ENCODE measurements at regions of chr17 and their contacts with region 1.

Region 1: GRCh38 chr17:82494236-82495055 is 25.1 kb upstream of the FOXK2 start:
- DNase-seq: peak; percentile 80
- H3K4me3 ChIP-seq: no peak overlapping the region
- H3K27ac ChIP-seq: no peak overlapping the region
- H3K4me1 ChIP-seq: no peaks in the 10 kb centered on the region
- H3K27me3 ChIP-seq: no peaks in the 10 kb centered on the region
- CTCF ChIP-seq: peak; percentile 31 to 90 (median 80)
- POLR2A ChIP-seq: no peak

Region 2: DNA sequence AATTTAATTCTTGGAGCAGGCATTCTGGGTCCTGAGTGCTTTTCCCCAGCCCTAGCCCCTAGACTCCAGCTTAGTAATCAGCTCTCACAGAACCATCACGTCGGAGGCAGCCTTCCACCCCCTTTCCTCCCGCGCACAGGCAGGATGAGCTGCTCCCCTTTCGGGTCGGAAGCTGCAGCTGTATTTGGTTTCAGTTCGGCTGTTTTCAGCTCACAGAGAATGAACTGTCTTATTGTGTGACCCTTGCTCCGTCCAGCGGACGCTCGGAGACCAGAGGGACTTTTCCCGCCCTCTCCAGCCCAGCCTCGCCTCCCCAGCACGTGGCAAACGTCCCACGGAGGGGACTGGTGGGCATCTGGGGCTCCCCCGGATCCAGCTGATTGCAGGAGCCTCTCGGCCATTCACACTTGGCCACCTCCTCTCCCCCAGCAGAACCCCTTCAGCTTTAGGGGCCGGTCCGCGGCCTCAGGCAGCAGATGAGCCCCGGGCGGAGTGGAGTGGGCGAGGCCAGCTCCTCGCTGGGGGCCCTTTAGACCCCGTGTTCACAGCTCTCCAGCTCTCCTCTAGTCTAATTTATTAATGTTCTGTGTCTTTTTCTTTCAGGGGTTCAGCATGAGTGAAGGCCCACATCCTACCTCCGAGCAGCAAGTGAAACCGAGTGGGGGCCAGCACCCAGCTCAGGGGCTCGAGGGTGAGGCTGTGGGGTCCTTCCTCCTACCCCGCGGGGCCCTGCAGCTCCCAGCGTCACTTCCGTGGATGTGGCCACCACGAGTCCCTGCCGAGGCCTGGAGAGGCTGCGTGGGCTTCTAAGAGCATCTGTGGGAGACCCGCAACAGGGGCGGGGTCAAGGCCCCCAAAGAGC is 123.7 kb before region 1 on chr17:
- intact Hi-C with region 1: no loop called
- DNase-seq: no peak
- H3K4me3 ChIP-seq: no peak overlapping the region
- H3K27ac ChIP-seq: no peak overlapping the region
- H3K4me1 ChIP-seq: peaks cover 4% of the 10 kb centered on the region
- H3K27me3 ChIP-seq: peaks cover 29% of the 10 kb centered on the region
- CTCF ChIP-seq: no peak
- POLR2A ChIP-seq: no peak

Region 3: DNA sequence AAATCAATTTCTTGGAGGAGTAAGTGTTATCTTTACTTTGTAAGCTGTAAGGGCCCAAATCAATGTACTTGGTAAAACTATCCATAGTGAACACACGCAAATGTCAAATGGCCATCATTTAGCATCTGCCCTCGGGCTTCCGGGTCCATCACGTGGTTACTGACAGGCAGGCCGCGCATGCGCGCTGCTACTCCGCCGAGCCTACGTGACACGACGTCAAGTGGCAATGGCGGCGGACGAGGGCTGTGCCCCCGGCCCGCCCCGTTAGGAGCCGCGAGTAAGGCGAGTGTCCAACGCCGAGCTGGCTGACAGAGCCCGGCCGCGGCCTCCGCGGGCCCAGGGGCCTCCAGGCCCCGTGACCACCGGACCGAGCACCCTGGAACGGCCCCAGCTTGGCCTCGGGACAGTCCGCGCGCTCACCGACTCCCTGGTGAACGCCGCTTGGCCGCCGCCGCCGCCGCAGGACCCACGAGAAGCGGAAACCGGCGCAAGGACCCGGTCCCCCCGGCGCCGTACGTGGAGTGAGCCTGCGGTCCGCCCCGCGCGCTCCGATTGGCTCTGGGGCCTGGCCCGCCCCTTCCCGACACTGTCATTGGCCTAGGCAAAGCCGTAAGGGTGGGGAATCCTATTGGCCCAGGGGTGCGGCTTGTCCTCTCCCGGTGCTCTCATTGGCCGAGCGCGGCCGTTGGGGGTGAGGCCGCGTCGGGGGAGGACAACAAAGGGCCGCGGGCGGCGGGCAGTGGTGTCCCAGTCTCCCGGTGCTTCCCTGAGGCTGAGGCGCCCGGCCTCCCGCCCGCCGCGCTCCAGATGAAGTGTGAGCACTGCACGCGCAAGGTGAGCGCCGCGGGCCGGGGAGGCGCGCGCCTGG is 36.2 kb before region 1 on chr17 and contains the start of gene NARF:
- intact Hi-C with region 1: loop called (anchors 5 kb)
- DNase-seq: peak; percentile 98
- H3K4me3 ChIP-seq: peak within 1 kb of the TSS; percentile 67 to 95
- H3K27ac ChIP-seq: peak within 1 kb of the TSS; percentile 100
- H3K4me1 ChIP-seq: peaks cover 8% of the 10 kb centered on the region
- H3K27me3 ChIP-seq: no peaks in the 10 kb centered on the region
- CTCF ChIP-seq: no peak
- POLR2A ChIP-seq: peak; percentile 93
- total RNA-seq, gene NARF: 38.4 to 68.1 TPM

Region 4: GRCh38 chr17:82536512-82537201 is 42.2 kb after region 1 on chr17:
- intact Hi-C with region 1: loop called (anchors 5 kb)
- DNase-seq: no peak
- H3K4me3 ChIP-seq: no peak overlapping the region
- H3K27ac ChIP-seq: peak overlapping the region; percentile 81 to 90
- H3K4me1 ChIP-seq: peaks cover 15% of the 10 kb centered on the region
- H3K27me3 ChIP-seq: no peaks in the 10 kb centered on the region
- CTCF ChIP-seq: no peak
- POLR2A ChIP-seq: no peak

Region 5: DNA sequence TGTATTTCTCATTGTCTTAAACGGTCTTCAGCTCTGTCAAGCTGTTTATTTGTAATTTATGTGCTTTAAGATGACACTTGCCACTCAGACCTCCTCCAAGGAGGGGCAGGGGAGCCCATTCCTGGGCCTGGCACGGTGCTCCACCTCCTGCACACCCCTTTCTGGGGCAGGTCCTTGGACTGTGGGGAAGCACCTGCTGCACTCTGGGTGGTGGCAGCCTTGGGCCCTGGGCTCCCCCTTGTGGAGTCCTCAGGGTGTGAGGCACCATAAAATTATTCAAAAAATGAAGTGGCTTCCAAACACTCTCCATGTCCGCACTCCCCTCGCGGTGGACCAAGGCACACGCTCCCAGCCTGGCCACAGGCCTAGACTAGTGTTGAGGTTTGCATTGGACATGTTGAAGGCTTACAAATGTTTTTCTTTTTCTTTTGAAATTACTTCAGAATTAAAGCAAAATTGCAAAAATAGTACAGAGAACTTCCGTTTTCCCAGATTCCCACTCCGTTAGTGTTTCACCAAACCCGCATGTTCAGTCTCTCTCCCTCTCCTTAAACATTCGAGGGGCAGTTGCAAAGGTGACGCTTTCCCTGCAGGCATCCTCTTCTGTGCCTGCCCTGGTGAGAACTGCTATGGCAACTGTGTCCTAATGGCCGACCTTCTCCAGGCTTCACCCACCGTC is 57.5 kb after region 1 on chr17:
- intact Hi-C with region 1: loop called (anchors 5 kb)
- DNase-seq: peak; percentile 70
- H3K4me3 ChIP-seq: no peak overlapping the region
- H3K27ac ChIP-seq: peak overlapping the region in 1 of 2 donors; percentile 4
- H3K4me1 ChIP-seq: peaks cover 6% of the 10 kb centered on the region
- H3K27me3 ChIP-seq: no peaks in the 10 kb centered on the region
- CTCF ChIP-seq: peak; percentile 53 to 84 (median 75)
- POLR2A ChIP-seq: no peak